Ovary (tissue), 10 donors: ENCODE measurements at regions of chr16 and their contacts with region 1.

Region 1: GRCh38 chr16:15949210-15950160 is at the start of gene ABCC1:
- DNase-seq: peak; percentile 19 to 64 (median 46)
- H3K4me3 ChIP-seq: peak within 1 kb of the TSS; percentile 91
- H3K27ac ChIP-seq: peak within 1 kb of the TSS; percentile 64 to 89
- H3K4me1 ChIP-seq: peaks cover 6% of the 10 kb centered on the region
- H3K27me3 ChIP-seq: no peaks in the 10 kb centered on the region
- CTCF ChIP-seq: no peak
- EP300 ChIP-seq: no peak
- POLR2A ChIP-seq: no peak
- total RNA-seq, gene ABCC1: 10.0 to 31.1 (median 24.9) TPM

Region 2: GRCh38 chr16:16021988-16022682 is 72.7 kb after region 1 on chr16:
- intact Hi-C with region 1: loop called in 1 of 4 experiments (anchors 5 kb)
- DNase-seq: peak; percentile 97 to 99 (median 97)
- H3K4me3 ChIP-seq: no peak overlapping the region
- H3K27ac ChIP-seq: peak overlapping the region; percentile 38 to 62
- H3K4me1 ChIP-seq: peaks cover 13% of the 10 kb centered on the region
- H3K27me3 ChIP-seq: no peaks in the 10 kb centered on the region
- CTCF ChIP-seq: no peak
- EP300 ChIP-seq: no peak
- POLR2A ChIP-seq: no peak